IMR-90 (cell line): ENCODE measurements at regions of chr18 and their contacts with region 1.

Region 1: DNA sequence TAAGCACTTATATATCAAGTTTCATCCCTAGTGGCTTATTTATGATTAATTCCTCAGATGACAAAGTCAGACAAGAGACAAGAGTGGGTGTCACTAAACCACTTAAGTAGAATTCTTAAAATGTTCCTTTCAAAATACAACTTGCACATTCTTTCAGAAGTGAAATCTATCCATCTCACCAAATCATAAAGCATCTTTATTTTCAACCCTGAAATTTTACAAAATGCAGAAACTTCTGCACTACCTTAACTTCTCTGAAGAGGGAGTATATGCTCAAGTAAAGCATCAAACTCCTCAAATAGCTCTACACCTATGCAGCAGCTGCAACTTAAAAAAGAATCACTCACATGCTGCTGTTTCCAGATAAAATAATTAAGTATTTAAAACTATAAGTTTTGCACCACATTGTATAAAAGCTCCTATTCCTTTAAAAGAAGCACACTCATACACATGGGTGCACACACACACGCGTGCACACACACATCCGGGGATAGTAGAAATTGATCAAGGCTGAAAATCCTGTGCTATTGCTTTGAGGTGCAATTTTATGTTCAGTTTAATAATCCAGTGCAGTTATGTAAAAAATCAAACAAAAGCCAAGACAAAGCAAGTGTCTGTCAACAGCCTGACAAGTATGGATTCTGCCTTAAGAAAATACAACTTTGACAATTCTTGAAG is 244.5 kb downstream of the TCF4 start:
- DNase-seq: peak; percentile 64
- ATAC-seq: peak; percentile 84
- H3K4me3 ChIP-seq: no peak overlapping the region
- H3K27ac ChIP-seq: no peak overlapping the region
- H3K4me1 ChIP-seq: peaks cover 10% of the 10 kb centered on the region
- H3K27me3 ChIP-seq: no peaks in the 10 kb centered on the region
- CTCF ChIP-seq: peak; percentile 65
- POLR2A ChIP-seq: no peak
- RAD21 ChIP-seq: peak; percentile 80

Region 2: DNA sequence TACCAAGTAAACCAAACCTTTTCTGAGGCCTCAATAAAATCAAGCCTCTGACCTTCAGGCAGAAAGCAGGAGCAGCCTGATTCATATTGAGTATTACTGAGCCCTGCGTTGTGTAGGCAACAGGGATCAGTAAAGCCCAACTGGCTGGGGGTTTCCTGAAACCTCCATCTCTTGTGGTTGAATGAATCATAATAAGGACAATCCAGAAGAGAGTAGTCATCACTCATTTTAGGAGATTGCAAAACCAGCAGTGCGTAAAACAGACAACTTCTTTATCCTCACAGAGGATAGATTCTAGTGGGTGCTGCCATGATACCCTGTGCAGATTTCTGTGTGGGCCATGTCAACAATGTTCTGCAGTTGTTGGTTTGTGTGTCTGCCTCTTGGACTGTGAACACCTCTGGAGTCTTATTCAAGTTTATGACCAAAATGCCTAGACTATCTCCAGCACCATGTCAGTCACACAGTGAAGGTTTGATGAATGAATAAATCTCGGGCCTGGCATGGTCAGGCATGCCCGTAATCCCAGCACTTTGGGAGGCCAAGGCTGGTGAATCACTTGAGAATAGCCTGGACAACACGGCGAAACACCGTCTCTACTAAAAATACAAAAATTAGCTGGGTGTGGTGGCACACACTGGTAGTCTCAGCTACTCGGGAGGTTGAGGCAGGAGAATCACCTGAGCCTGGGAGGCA is 567.1 kb before region 1 on chr18:
- CTCF ChIA-PET with region 1: no interaction called
- POLR2A ChIA-PET with region 1: no interaction called
- dilution Hi-C with region 1: no loop called
- in situ Hi-C with region 1: no loop called
- intact Hi-C with region 1: no loop called
- DNase-seq: peak; percentile 99
- ATAC-seq: peak; percentile 93
- H3K4me3 ChIP-seq: no peak overlapping the region
- H3K27ac ChIP-seq: peak overlapping the region; percentile 86
- H3K4me1 ChIP-seq: peaks cover 16% of the 10 kb centered on the region
- H3K27me3 ChIP-seq: no peaks in the 10 kb centered on the region
- CTCF ChIP-seq: no peak
- POLR2A ChIP-seq: no peak; the same call in 1 of the 2 replicates
- RAD21 ChIP-seq: 0 out of 2 replicates have a peak, but pooled peaks have one; percentile 2

Region 3: GRCh38 chr18:55422456-55423180 is 79.1 kb after region 1 on chr18:
- CTCF ChIA-PET with region 1: no interaction called
- POLR2A ChIA-PET with region 1: no interaction called
- dilution Hi-C with region 1: no loop called
- in situ Hi-C with region 1: no loop called
- intact Hi-C with region 1: loop called (anchors 5 kb)
- DNase-seq: peak; percentile 53
- ATAC-seq: no peak
- H3K4me3 ChIP-seq: peak overlapping the region; percentile 43
- H3K27ac ChIP-seq: peak overlapping the region; percentile 78
- H3K4me1 ChIP-seq: peaks cover 12% of the 10 kb centered on the region; the same call in 1 of the 2 replicates
- H3K27me3 ChIP-seq: no peaks in the 10 kb centered on the region
- CTCF ChIP-seq: no peak
- POLR2A ChIP-seq: no peak
- RAD21 ChIP-seq: no peak

Region 4: DNA sequence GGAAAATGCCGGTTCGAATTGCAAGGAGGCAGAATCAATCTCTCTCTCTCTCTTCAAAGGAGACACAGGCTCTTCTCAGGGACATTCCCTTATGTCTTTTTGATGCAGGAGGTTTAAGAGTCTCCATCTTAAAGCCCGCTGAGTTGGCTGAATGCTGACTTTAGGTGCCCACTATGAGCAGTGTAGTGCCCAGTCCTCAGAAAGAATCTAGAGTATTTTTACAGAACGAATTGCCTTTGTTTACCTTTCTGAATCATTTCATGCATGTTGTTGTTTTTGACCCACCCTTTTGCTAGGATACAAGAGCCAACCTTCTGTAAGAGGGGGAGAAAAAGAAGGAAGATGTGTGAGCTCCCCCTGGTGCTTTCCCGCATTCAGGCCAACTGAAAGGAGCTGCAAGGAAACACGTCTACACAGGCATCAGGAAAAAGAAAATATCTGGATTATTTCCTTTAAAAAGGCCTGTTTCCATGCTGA is 438.0 kb after region 1 on chr18:
- CTCF ChIA-PET with region 1: no interaction called
- POLR2A ChIA-PET with region 1: no interaction called
- dilution Hi-C with region 1: no loop called
- in situ Hi-C with region 1: no loop called
- intact Hi-C with region 1: loop called (anchors 2 kb)
- DNase-seq: peak; percentile 77
- ATAC-seq: peak; percentile 63
- H3K4me3 ChIP-seq: no peak overlapping the region
- H3K27ac ChIP-seq: no peak overlapping the region
- H3K4me1 ChIP-seq: no peaks in the 10 kb centered on the region; the same call in 1 of the 2 replicates
- H3K27me3 ChIP-seq: no peaks in the 10 kb centered on the region
- CTCF ChIP-seq: peak; percentile 80
- POLR2A ChIP-seq: no peak
- RAD21 ChIP-seq: peak; percentile 87

Region 5: DNA sequence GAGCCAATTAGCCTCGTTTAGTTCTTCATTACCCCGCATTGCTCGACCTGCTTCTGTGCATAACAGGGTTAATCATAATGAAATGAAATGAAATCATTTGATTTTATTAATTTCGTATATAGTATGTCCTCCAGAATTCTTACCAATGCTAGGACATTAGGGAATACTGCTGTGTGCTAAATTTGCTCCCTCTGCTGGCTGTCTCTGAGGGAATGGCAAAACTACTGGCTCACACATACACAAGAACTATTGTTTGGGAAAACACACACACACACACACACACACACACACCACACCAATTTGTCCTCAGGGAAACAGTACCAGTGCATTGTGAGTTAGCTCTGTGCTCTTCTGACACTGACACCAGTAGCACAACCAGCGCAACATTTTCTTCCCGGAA is 517.7 kb after region 1 on chr18:
- CTCF ChIA-PET with region 1: no interaction called
- POLR2A ChIA-PET with region 1: no interaction called
- dilution Hi-C with region 1: no loop called
- in situ Hi-C with region 1: no loop called
- intact Hi-C with region 1: loop called (anchors 5 kb)
- DNase-seq: peak; percentile 60
- ATAC-seq: peak; percentile 59; the same call in 1 of the 2 replicates
- H3K4me3 ChIP-seq: no peak overlapping the region
- H3K27ac ChIP-seq: no peak overlapping the region
- H3K4me1 ChIP-seq: no peaks in the 10 kb centered on the region
- H3K27me3 ChIP-seq: no peaks in the 10 kb centered on the region
- CTCF ChIP-seq: peak; percentile 54
- POLR2A ChIP-seq: no peak
- RAD21 ChIP-seq: peak; percentile 58

Region 6: GRCh38 chr18:56391931-56392590 is 1048.5 kb after region 1 on chr18:
- CTCF ChIA-PET with region 1: no interaction called
- POLR2A ChIA-PET with region 1: no interaction called
- dilution Hi-C with region 1: no loop called
- in situ Hi-C with region 1: no loop called
- intact Hi-C with region 1: loop called (anchors 10 kb)
- DNase-seq: no peak
- ATAC-seq: no peak
- H3K4me3 ChIP-seq: no peak overlapping the region
- H3K27ac ChIP-seq: no peak overlapping the region
- H3K4me1 ChIP-seq: no peaks in the 10 kb centered on the region
- H3K27me3 ChIP-seq: no peaks in the 10 kb centered on the region
- CTCF ChIP-seq: no peak
- POLR2A ChIP-seq: no peak
- RAD21 ChIP-seq: no peak